Sigmoid colon (tissue), 7 donors: ENCODE measurements at regions of chr5 and their contacts with region 1.

Region 1: DNA sequence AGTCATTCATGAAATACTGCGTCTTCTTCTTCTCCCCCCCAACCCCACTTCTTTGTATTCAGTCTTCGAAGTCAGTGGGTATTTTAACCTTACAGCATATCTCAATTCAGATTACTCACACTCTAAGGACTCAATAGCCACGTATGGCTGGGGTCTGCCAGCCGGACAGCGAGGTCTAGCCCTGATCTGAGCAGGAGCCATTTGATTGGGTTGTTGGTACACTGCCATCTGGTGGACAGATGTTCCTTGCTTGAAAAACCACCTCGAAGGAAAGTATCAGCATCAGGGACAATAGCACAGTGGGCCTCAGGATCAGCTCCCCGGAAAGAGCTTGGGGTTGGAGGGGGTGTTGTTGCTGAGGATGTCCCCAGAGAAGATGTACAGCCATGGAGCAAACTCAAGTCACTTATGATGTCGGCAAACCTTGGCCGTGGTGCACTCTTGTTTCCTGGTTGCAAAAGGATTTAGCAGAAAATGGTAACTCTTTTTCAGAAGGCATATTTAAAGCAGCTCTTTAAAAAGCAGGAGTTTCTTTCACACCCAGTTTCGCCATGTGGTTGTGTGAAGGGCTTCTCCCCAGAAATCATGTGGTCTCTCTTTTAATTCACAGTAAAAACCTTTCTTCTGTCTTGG is 31.7 kb upstream of the KCNMB1 start:
- DNase-seq: peak; percentile 85
- H3K4me3 ChIP-seq: no peak overlapping the region
- H3K27ac ChIP-seq: no peak overlapping the region
- H3K4me1 ChIP-seq: peaks cover 0 to 23% (median 8%) of the 10 kb centered on the region in 4 donors
- H3K27me3 ChIP-seq: no peaks in the 10 kb centered on the region
- CTCF ChIP-seq: peak; percentile 35 to 75 (median 69)
- EP300 ChIP-seq: no peak
- POLR2A ChIP-seq: no peak

Region 2: GRCh38 chr5:170100066-170100943 is 320.6 kb before region 1 on chr5:
- intact Hi-C with region 1: loop called (anchors 5 kb)
- DNase-seq: peak; percentile 84
- H3K4me3 ChIP-seq: no peak overlapping the region
- H3K27ac ChIP-seq: no peak overlapping the region
- H3K4me1 ChIP-seq: peaks cover 0 to 6% (median 0%) of the 10 kb centered on the region in 4 donors
- H3K27me3 ChIP-seq: no peaks in the 10 kb centered on the region
- CTCF ChIP-seq: peak in 3 of 4 experiments; percentile 42 to 49 (median 43)
- EP300 ChIP-seq: no peak
- POLR2A ChIP-seq: no peak

Region 3: GRCh38 chr5:170225326-170226128 is 195.4 kb before region 1 on chr5:
- intact Hi-C with region 1: loop called (anchors 1 kb)
- DNase-seq: peak; percentile 86
- H3K4me3 ChIP-seq: no peak overlapping the region
- H3K27ac ChIP-seq: no peak overlapping the region
- H3K4me1 ChIP-seq: peaks cover 0 to 26% (median 8%) of the 10 kb centered on the region in 4 donors
- H3K27me3 ChIP-seq: no peaks in the 10 kb centered on the region
- CTCF ChIP-seq: peak; percentile 34 to 73 (median 63)
- EP300 ChIP-seq: no peak
- POLR2A ChIP-seq: no peak

Region 4: DNA sequence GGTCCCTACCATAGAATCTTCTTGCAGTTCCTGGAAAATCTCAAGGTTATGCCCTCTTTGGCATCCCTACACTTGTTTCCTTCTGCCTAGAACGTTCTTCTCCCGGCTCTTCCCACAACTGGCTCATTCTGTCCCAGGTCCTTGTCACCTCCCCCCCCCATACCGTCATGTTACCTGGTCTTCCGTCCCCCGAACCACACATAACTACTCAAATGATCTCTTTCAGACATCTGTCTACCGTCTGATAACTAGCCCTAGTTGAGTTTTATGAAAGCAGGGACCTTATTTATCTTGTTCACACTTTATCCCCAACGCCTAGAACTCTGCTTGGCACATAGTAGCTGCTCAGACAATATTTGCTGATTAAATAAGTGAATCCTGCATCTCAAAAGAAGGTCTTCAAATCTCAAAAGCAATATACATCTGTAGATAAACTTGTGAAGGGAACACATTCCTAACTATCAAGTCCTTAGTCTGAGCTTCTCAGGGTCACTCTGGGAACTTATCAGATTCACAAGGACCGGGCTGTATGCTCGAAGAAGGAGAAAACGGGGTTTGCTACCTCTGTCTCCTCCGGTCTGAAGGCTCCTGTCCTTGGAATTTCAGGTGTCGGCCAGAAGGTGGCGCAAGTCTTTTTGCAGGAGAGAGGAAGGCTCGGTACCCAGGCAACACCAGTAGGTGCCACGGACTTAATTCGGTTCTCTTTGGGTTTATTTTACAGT is 153.3 kb before region 1 on chr5:
- intact Hi-C with region 1: loop called (anchors 1 kb)
- DNase-seq: peak; percentile 92
- H3K4me3 ChIP-seq: peak overlapping the region in 3 of 4 donors; percentile 5 to 24 (median 22)
- H3K27ac ChIP-seq: peak overlapping the region; percentile 38 to 62 (median 49)
- H3K4me1 ChIP-seq: peaks cover 0 to 14% (median 14%) of the 10 kb centered on the region in 4 donors
- H3K27me3 ChIP-seq: peaks cover 0 to 8% (median 0%) of the 10 kb centered on the region in 3 donors
- CTCF ChIP-seq: peak; percentile 66 to 85 (median 77)
- EP300 ChIP-seq: no peak
- POLR2A ChIP-seq: no peak

Region 5: DNA sequence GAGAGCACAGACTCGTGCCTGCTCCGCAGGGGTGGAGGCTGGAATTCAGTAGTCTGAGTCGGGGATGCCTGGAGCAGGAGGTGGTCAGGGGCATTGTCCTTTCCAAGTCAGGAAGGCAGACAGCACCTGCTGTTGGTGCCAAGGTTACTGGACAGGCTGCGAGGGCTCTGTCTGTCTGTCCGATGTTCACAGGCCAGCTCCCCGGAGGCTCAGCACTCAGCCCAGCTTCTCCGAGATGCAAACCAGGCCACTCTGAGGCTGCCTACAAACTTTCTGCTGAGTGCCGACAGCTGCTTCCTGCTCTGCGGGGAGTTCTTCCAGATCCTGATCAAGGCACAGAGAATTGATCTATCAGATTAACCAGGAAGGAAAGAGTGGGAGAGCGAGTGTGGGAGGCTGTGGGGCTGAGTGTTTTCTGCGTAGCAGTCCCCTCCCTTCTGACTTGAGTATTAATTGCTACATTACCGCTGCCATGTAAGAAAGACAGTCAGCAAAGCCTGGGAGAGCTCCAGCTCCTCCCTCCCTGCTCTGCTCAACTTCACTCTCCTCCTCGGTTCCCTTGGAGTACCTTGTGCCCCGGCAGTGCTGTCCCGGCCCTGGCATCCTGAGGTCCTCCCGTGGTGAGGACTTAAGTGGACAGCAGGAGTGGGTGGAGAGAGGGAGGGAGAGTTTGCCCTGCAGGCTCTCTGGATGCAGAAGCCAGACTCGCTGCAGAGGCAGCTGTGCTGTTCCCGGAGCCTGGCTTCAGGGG is 67.7 kb before region 1 on chr5:
- intact Hi-C with region 1: loop called (anchors 5 kb)
- DNase-seq: peak; percentile 80
- H3K4me3 ChIP-seq: peak overlapping the region in 3 of 4 donors; percentile 4 to 40 (median 35)
- H3K27ac ChIP-seq: peak overlapping the region in 3 of 4 donors; percentile 70 to 82 (median 79)
- H3K4me1 ChIP-seq: peaks cover 0 to 51% (median 34%) of the 10 kb centered on the region in 4 donors
- H3K27me3 ChIP-seq: no peaks in the 10 kb centered on the region
- CTCF ChIP-seq: no peak
- EP300 ChIP-seq: peak in 1 of 4 donors; percentile 2
- POLR2A ChIP-seq: no peak